ENCODE measurements at regions of chr2 and their contacts with region 1.

Region 1: DNA sequence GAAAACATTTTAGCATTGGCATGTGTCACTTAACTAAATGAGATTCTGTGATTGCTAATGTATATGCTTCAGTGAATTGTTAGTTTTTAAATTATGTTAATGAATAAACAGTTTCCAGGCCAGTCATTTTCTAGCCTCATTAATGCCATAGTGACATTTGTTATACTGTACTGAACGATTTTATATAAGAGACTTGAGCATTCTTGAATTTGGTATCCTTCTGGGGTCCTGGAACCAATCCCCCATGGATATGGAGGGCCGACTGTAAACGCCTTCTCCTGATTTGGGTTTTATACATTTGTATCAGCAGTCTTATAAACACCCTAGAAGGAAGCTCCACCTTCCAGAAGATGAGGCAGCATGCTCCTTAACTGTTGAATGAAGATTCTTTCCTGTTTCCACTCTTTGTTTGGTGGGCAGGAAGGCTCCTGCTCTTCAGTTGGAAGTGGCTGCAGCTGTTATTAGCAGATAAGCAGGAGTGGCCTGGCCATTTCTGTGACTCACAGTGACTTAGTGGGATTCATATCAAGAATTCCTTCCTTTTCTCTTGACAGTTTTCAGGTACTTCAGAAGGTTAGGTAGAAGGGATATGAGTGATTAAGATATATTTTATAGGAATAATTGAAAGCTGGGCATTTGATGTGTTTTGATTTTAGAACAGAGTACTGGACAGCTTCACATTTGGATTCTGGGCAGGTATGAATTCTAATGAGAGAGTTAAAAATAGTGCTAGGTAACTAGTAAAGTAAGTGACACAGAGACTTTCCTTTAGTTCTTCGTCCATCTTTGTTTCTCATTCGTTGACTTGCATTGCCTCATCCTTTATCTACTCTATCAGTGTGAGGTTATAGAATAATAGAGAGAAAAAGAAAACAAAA is 124.9 kb downstream of the PLCL1 start:
- DNase-seq: no peak

Region 2: GRCh38 chr2:196798980-196799379 is 1130.3 kb before region 1 on chr2:
- intact Hi-C with region 1: loop called in 1 of 2 experiments (anchors 10 kb)
- DNase-seq: no peak